IMR-90 (cell line): ENCODE measurements at regions of chr11 and their contacts with region 1.

Region 1: GRCh38 chr11:45102810-45103621 is 43.4 kb upstream of the PRDM11 start:
- DNase-seq: peak; percentile 88
- ATAC-seq: peak; percentile 87
- H3K4me3 ChIP-seq: 0 out of 2 replicates have a peak overlapping the region, but pooled peaks have one; percentile 5
- H3K27ac ChIP-seq: peak overlapping the region; percentile 25; the same call in 1 of the 2 replicates
- H3K4me1 ChIP-seq: peaks cover 5% of the 10 kb centered on the region; the same call in 1 of the 2 replicates
- H3K27me3 ChIP-seq: peaks cover 17% of the 10 kb centered on the region
- CTCF ChIP-seq: peak; percentile 95
- POLR2A ChIP-seq: no peak
- RAD21 ChIP-seq: peak; percentile 96

Region 2: DNA sequence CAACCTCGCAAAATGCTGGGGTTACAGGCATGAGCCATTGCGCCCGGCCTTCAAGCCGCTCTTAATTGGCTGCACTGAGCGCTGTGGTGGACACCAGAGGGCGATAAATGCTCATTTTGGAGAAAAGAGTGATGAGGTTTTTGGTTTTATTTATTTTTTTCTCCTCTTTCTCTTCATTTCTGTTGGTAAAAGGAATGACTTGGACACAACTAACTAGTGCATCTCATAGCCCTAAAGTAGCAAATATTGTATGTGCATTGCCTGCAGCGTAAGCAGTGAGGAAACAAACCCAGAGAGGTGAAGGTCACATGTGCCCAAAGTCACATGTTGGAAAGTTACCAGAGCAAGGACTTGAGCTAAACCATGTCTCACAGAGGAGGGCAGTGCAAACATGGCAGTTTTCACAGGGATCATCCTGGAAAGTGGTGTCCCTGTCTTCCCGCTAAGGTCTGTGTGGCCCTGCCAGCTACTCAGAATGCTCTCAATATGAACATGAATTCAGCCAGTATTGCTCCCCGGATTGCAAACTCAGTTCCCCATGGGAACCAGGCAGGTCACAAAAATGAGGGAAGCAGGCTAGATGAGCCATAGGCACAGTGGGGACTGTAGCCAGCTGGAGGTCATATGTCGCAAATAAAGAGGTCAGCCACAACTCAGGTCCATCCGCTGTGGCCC is 546.1 kb before region 1 on chr11:
- CTCF ChIA-PET with region 1: no interaction called
- POLR2A ChIA-PET with region 1: no interaction called
- dilution Hi-C with region 1: no loop called
- in situ Hi-C with region 1: no loop called
- intact Hi-C with region 1: loop called (anchors 10 kb)
- DNase-seq: peak; percentile 59
- ATAC-seq: peak; percentile 82
- H3K4me3 ChIP-seq: no peak overlapping the region
- H3K27ac ChIP-seq: no peak overlapping the region
- H3K4me1 ChIP-seq: no peaks in the 10 kb centered on the region
- H3K27me3 ChIP-seq: no peaks in the 10 kb centered on the region; the same call in 1 of the 2 replicates
- CTCF ChIP-seq: peak; percentile 84
- POLR2A ChIP-seq: no peak
- RAD21 ChIP-seq: peak; percentile 90

Region 3: DNA sequence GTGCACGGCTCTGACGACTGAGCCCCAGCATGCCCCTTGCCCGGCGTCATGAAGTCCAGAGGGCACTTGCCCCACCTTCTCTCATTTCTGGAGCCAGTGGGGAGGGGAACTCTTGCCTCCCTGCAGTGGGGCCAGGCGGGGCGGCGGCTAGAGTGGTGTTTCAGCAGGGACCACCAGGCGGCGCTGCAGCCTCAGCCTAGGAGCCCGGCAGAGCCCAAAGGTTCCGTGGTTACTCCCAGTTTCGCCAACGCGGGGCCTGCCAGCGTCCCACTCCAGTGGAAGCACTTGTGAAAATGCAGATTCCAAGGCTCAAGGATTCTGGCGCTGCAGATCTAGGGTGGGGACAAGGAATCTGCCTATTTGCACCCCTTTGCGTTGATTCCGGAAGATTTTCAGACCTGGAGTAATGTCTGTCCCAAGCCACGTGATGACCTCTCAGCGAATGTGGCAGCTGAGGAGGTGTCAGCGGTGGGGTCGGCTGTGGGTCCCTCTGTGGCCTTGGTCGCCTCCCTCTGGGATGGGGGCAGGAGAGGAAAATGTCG is 481.8 kb before region 1 on chr11:
- CTCF ChIA-PET with region 1: no interaction called
- POLR2A ChIA-PET with region 1: no interaction called
- dilution Hi-C with region 1: no loop called
- in situ Hi-C with region 1: no loop called
- intact Hi-C with region 1: loop called (anchors 5 kb)
- DNase-seq: peak; percentile 41
- ATAC-seq: peak; percentile 88
- H3K4me3 ChIP-seq: no peak overlapping the region
- H3K27ac ChIP-seq: no peak overlapping the region
- H3K4me1 ChIP-seq: no peaks in the 10 kb centered on the region; the same call in 1 of the 2 replicates
- H3K27me3 ChIP-seq: no peaks in the 10 kb centered on the region
- CTCF ChIP-seq: peak; percentile 90
- POLR2A ChIP-seq: no peak
- RAD21 ChIP-seq: peak; percentile 97

Region 4: GRCh38 chr11:44634401-44635281 is 468.4 kb before region 1 on chr11:
- CTCF ChIA-PET with region 1: no interaction called
- POLR2A ChIA-PET with region 1: no interaction called
- dilution Hi-C with region 1: no loop called
- in situ Hi-C with region 1: no loop called
- intact Hi-C with region 1: no loop called
- DNase-seq: peak; percentile 79
- ATAC-seq: peak; percentile 79
- H3K4me3 ChIP-seq: no peak overlapping the region
- H3K27ac ChIP-seq: no peak overlapping the region
- H3K4me1 ChIP-seq: peaks cover 7% of the 10 kb centered on the region
- H3K27me3 ChIP-seq: peaks cover 6% of the 10 kb centered on the region
- CTCF ChIP-seq: no peak
- POLR2A ChIP-seq: no peak
- RAD21 ChIP-seq: no peak

Region 5: GRCh38 chr11:44927174-44927661 is 175.8 kb before region 1 on chr11:
- CTCF ChIA-PET with region 1: interaction called, 59 read pairs
- POLR2A ChIA-PET with region 1: interaction called, 4 read pairs
- dilution Hi-C with region 1: no loop called
- in situ Hi-C with region 1: loop called (anchors 5 kb)
- intact Hi-C with region 1: loop called (anchors 1 kb)
- DNase-seq: peak; percentile 66
- ATAC-seq: peak; percentile 87
- H3K4me3 ChIP-seq: no peak overlapping the region
- H3K27ac ChIP-seq: no peak overlapping the region
- H3K4me1 ChIP-seq: no peaks in the 10 kb centered on the region
- H3K27me3 ChIP-seq: peaks cover 10% of the 10 kb centered on the region
- CTCF ChIP-seq: peak; percentile 83
- POLR2A ChIP-seq: no peak
- RAD21 ChIP-seq: peak; percentile 76

Region 6: GRCh38 chr11:44936525-44936924 is 166.5 kb before region 1 on chr11:
- CTCF ChIA-PET with region 1: interaction called, 70 read pairs
- POLR2A ChIA-PET with region 1: no interaction called
- dilution Hi-C with region 1: no loop called
- in situ Hi-C with region 1: no loop called
- intact Hi-C with region 1: loop called (anchors 1 kb)
- DNase-seq: peak; percentile 76
- ATAC-seq: peak; percentile 97
- H3K4me3 ChIP-seq: no peak overlapping the region
- H3K27ac ChIP-seq: no peak overlapping the region
- H3K4me1 ChIP-seq: no peaks in the 10 kb centered on the region; the same call in 1 of the 2 replicates
- H3K27me3 ChIP-seq: no peaks in the 10 kb centered on the region
- CTCF ChIP-seq: peak; percentile 95
- POLR2A ChIP-seq: 0 out of 2 replicates have a peak, but pooled peaks have one; percentile 48
- RAD21 ChIP-seq: peak; percentile 97

Region 7: DNA sequence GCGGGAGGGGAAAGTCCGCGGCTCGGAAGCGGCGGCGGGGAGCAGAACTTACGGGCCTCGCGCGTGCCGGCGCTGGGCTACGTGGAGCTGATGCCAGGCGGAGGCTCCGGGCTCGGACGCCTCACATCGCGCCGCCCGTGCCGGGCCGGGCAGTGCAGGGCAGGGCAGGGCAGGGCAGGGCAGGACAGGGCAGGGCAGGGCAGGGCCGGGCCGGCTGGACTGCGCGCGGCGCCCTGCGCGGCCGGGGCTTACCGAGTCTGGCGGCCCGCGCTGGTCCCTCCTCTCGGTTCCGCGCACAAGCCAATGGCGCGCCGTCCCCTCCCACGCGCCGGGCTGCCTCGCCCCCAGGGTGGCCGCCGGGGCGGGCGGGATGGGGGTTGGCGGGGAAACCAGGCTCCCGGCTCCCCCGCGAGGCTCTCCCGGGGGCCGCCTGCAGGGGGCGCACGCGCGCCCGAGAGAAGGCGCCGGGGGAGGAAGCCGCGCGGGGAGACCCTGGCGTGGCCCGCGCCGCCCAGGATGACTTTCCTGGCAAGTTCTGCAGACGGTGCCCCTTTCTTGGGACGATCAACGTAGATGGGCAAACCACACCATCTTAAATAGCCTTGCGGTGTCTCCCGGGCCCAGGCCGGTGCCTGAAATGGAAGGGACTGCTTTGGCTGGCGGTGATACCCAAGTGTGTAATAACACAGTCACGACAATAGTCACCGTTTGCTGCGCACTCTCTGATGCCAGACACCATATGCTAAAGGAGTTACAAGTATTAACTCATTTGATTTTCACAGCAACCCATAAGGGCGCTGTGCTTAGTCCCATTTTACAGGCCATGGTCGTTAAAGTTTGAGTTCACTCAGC is 152.2 kb before region 1 on chr11 and contains the start of gene TP53I11:
- CTCF ChIA-PET with region 1: interaction called, 7 read pairs
- POLR2A ChIA-PET with region 1: no interaction called
- dilution Hi-C with region 1: no loop called
- in situ Hi-C with region 1: no loop called
- intact Hi-C with region 1: loop called (anchors 1 kb)
- DNase-seq: peak; percentile 60
- ATAC-seq: peak; percentile 84
- H3K4me3 ChIP-seq: peak within 1 kb of the TSS; percentile 95
- H3K27ac ChIP-seq: peak within 1 kb of the TSS; percentile 87
- H3K4me1 ChIP-seq: peaks cover 11% of the 10 kb centered on the region
- H3K27me3 ChIP-seq: no peaks in the 10 kb centered on the region
- CTCF ChIP-seq: peak; percentile 60
- POLR2A ChIP-seq: no peak
- RAD21 ChIP-seq: no peak
- total RNA-seq, gene TP53I11: 3.9 TPM in 2 replicates

Region 8: GRCh38 chr11:45298718-45299117 is 195.7 kb after region 1 on chr11:
- CTCF ChIA-PET with region 1: interaction called, 3 read pairs
- POLR2A ChIA-PET with region 1: no interaction called
- dilution Hi-C with region 1: no loop called
- in situ Hi-C with region 1: loop called (anchors 5 kb)
- intact Hi-C with region 1: no loop called
- DNase-seq: no peak
- ATAC-seq: no peak
- H3K4me3 ChIP-seq: no peak overlapping the region
- H3K27ac ChIP-seq: no peak overlapping the region
- H3K4me1 ChIP-seq: no peaks in the 10 kb centered on the region
- H3K27me3 ChIP-seq: peaks cover 15% of the 10 kb centered on the region
- CTCF ChIP-seq: no peak
- POLR2A ChIP-seq: no peak
- RAD21 ChIP-seq: no peak